Ascending aorta (tissue), 2 donors: ENCODE measurements at regions of chr15 and their contacts with region 1.

Region 1: GRCh38 chr15:78750566-78750965 is 60.7 kb downstream of the ADAMTS7 start:
- DNase-seq: peak in 1 of 2 donors; percentile 61
- H3K4me3 ChIP-seq: peak overlapping the region; percentile 16 to 56
- H3K27ac ChIP-seq: peak overlapping the region; percentile 5 to 69
- H3K4me1 ChIP-seq: peaks cover 0 to 3% of the 10 kb centered on the region in 2 donors
- H3K27me3 ChIP-seq: no peaks in the 10 kb centered on the region
- CTCF ChIP-seq: no peak

Region 2: GRCh38 chr15:77944002-77944867 is 806.3 kb before region 1 on chr15:
- intact Hi-C with region 1: loop called (anchors 5 kb)
- DNase-seq: peak; percentile 50 to 93
- H3K4me3 ChIP-seq: peak overlapping the region; percentile 61 to 69
- H3K27ac ChIP-seq: peak overlapping the region; percentile 70 to 77
- H3K4me1 ChIP-seq: peaks cover 0 to 5% of the 10 kb centered on the region in 2 donors
- H3K27me3 ChIP-seq: no peaks in the 10 kb centered on the region
- CTCF ChIP-seq: no peak

Region 3: DNA sequence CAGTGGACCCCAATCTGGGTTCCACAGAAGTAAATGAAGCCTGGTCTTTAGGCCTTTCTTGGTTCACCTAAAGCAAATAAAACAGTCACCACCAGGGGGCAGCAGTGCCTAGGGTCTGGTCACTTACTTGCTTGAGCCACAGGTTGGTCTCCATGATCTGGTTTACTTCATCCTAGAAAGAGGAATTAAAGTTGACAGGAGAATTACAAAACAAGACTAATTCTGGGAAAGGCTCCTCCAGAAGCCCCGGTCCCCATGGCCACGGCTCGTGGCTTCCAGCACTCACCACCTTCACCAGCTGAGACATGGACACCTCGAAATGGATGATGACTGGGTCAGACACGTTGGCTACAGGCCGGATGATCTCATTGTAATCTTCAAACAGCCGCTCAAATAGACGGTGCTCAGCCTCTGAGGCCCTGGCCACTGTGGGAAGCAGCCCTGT is 132.1 kb before region 1 on chr15:
- intact Hi-C with region 1: loop called (anchors 1 kb)
- DNase-seq: peak in 1 of 2 donors; percentile 94
- H3K4me3 ChIP-seq: no peak overlapping the region
- H3K27ac ChIP-seq: no peak overlapping the region
- H3K4me1 ChIP-seq: peaks cover 0 to 11% of the 10 kb centered on the region in 2 donors
- H3K27me3 ChIP-seq: peaks cover 13% of the 10 kb centered on the region
- CTCF ChIP-seq: peak; percentile 70 to 90 (median 81)

Region 4: DNA sequence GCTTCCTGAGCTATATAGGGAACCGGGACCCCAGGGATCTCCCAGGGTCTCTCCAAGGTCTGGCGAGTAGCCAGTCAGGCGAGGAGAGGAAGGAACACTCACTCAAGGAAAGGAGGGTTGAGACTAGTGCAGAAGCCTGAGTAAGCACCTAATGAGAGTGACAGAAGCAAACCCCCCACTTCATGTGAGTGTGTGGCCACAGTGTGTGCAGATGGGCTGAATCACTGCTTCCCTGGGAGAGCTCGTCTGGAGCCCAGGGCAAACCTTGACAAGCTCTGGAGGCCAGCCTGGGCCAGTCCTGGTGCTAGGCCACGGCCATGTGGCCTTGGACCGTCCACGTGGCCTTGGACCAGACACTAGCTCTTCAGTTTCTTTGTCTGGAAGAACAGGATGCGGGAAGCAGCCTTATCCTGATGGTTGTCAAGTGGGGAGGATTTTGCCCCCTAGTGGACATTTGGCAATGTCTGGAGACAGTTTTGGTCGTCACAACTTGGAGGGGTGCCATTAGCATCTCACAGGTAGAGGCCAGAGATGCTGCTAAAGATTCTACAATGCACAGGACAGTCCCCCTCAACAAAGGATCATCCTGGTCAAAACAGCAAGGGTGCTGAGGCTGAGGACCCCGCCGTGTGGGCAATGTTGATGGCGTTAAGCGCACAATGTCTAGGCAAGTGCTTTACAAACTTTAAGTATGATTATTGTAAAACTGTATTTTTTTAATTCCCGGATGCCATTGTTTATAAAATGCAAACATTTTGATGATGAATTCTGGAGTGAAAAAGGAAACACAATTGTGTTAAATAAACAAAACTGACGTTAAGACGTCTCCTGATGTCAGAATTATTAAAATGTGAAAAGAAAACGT is 229.1 kb after region 1 on chr15:
- intact Hi-C with region 1: loop called (anchors 10 kb)
- DNase-seq: peak in 1 of 2 donors; percentile 73
- H3K4me3 ChIP-seq: no peak overlapping the region
- H3K27ac ChIP-seq: no peak overlapping the region
- H3K4me1 ChIP-seq: no peaks in the 10 kb centered on the region
- H3K27me3 ChIP-seq: no peaks in the 10 kb centered on the region
- CTCF ChIP-seq: peak in 2 of 3 experiments; percentile 44 to 63